IMR-90 (cell line): ENCODE measurements at regions of chr5 and their contacts with region 1.

Region 1: GRCh38 chr5:95730730-95731570 is at the start of gene RHOBTB3:
- DNase-seq: peak; percentile 91
- ATAC-seq: peak; percentile 75
- H3K4me3 ChIP-seq: peak within 1 kb of the TSS; percentile 98
- H3K27ac ChIP-seq: peak within 1 kb of the TSS; percentile 100
- H3K4me1 ChIP-seq: peaks cover 14% of the 10 kb centered on the region
- H3K27me3 ChIP-seq: no peaks in the 10 kb centered on the region
- CTCF ChIP-seq: no peak
- POLR2A ChIP-seq: peak; percentile 63; the same call in 1 of the 2 replicates
- RAD21 ChIP-seq: no peak; the same call in 1 of the 2 replicates
- total RNA-seq, gene RHOBTB3: 356 and 447 TPM in 2 replicates

Region 2: DNA sequence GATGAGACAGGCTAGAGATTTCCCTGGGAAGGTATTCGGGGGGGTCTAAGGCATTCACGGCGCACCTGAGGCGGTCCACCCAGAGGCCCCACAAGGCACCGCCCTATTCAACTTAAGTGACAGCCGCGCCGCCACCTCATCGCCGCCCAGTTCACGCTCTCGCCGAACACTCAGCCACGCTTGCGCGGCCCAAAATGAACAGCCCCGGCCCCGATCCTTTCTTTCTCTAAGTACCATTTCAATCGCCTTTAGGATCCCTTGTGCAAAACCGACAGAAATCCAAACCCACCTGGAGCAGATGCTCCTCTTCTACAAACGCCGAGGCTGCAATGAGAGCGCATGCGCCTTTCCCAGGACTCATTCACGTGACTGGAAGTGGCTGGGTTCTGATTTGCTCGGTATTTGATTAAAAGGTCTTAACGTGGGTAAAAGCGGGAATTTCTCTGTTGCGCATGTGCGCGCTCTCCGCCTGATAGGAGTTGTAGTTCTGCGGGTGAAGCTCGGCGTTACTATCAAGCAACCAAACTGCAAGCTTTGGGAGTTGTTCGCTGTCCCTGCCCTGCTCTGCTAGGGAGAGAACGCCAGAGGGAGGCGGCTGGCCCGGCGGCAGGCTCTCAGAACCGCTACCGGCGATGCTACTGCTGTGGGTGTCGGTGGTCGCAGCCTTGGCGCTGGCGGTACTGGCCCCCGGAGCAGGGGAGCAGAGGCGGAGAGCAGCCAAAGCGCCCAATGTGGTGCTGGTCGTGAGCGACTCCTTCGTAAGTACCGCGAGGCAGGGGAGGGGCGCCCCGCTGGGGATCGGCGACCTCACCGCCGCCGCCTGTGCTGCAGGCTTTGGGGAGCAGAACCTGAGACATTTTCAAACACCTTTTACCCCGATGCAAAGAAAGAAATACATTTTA is 176.1 kb before region 1 on chr5 and contains the starts of genes ARSK and SKIC3:
- CTCF ChIA-PET with region 1: no interaction called
- POLR2A ChIA-PET with region 1: no interaction called
- dilution Hi-C with region 1: no loop called
- in situ Hi-C with region 1: no loop called
- intact Hi-C with region 1: loop called (anchors 10 kb)
- DNase-seq: peak; percentile 99
- ATAC-seq: peak; percentile 93
- H3K4me3 ChIP-seq: peak within 1 kb of the TSS; percentile 52
- H3K27ac ChIP-seq: peak within 1 kb of the TSS; percentile 75
- H3K4me1 ChIP-seq: peaks cover 6% of the 10 kb centered on the region
- H3K27me3 ChIP-seq: no peaks in the 10 kb centered on the region
- CTCF ChIP-seq: peak; percentile 40
- POLR2A ChIP-seq: peak; percentile 67
- RAD21 ChIP-seq: peak; percentile 44
- total RNA-seq, gene ARSK: 22.0 and 25.0 TPM in 2 replicates
- total RNA-seq, gene SKIC3: 145 and 184 TPM in 2 replicates

Region 3: GRCh38 chr5:95664204-95664786 is 66.7 kb before region 1 on chr5:
- CTCF ChIA-PET with region 1: interaction called, 16 read pairs
- POLR2A ChIA-PET with region 1: interaction called, 7 read pairs
- dilution Hi-C with region 1: no loop called
- in situ Hi-C with region 1: loop called (anchors 5 kb)
- intact Hi-C with region 1: loop called (anchors 1 kb)
- DNase-seq: peak; percentile 49
- ATAC-seq: peak; percentile 79
- H3K4me3 ChIP-seq: no peak overlapping the region
- H3K27ac ChIP-seq: peak overlapping the region; percentile 34; the same call in 1 of the 2 replicates
- H3K4me1 ChIP-seq: peaks cover 8% of the 10 kb centered on the region; the same call in 1 of the 2 replicates
- H3K27me3 ChIP-seq: no peaks in the 10 kb centered on the region
- CTCF ChIP-seq: peak; percentile 79
- POLR2A ChIP-seq: no peak
- RAD21 ChIP-seq: peak; percentile 73

Region 4: GRCh38 chr5:95741458-95741857 is 10.5 kb after region 1 on chr5:
- CTCF ChIA-PET with region 1: no interaction called
- POLR2A ChIA-PET with region 1: interaction called, 20 read pairs
- dilution Hi-C with region 1: no loop called
- in situ Hi-C with region 1: no loop called
- intact Hi-C with region 1: no loop called
- DNase-seq: no peak
- ATAC-seq: no peak
- H3K4me3 ChIP-seq: no peak overlapping the region
- H3K27ac ChIP-seq: no peak overlapping the region
- H3K4me1 ChIP-seq: peaks cover 5% of the 10 kb centered on the region
- H3K27me3 ChIP-seq: no peaks in the 10 kb centered on the region
- CTCF ChIP-seq: no peak
- POLR2A ChIP-seq: no peak
- RAD21 ChIP-seq: no peak

Region 5: GRCh38 chr5:95846554-95847260 is 115.8 kb after region 1 on chr5:
- CTCF ChIA-PET with region 1: interaction called, 4 read pairs
- POLR2A ChIA-PET with region 1: no interaction called
- dilution Hi-C with region 1: no loop called
- in situ Hi-C with region 1: no loop called
- intact Hi-C with region 1: loop called (anchors 1 kb)
- DNase-seq: peak; percentile 79
- ATAC-seq: peak; percentile 92
- H3K4me3 ChIP-seq: no peak overlapping the region
- H3K27ac ChIP-seq: no peak overlapping the region
- H3K4me1 ChIP-seq: peaks cover 16% of the 10 kb centered on the region
- H3K27me3 ChIP-seq: no peaks in the 10 kb centered on the region
- CTCF ChIP-seq: peak; percentile 96
- POLR2A ChIP-seq: peak; percentile 50
- RAD21 ChIP-seq: peak; percentile 93